ENCODE measurements at regions of chr7 and their contacts with region 1.

Region 1: DNA sequence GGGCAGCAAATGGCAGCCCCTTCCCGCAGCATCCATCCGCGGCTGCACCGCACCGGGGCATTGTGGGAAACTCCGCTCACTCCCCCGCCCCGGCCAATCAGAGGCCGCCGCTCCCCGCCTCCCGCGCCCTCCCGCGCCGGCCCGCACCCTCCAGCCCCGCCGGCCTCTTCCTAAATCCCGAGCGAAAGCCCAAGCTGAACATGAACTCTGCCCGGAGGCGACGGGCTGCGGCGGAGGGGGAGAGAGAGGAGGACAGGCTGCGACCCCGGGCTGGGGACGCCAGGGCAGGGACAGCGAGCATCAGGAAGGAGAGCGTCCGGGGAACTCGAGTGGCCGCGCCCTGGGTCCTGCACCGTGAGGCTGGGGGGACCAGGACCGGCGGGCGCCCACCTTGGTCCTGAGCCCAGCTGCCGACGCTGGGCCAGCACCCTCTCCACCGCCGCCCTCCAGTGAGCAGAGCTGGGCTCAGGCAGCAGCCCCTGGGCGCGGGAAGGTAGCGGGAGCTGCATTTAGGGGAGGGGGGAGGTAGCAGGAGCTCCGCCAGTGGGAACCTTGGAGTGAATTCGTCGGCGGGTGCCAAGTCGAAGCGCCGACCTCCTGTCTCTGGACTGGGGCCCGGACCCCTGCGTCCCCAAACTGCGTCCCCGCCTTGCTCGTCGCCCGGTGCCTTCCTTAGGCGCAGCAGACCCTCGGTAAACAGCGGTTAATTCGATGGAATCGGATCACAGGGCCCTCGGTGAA is at the start of gene DGKI:
- DNase-seq: no peak
- H3K4me3 ChIP-seq: peak within 1 kb of the TSS in 2 of 4 donors; percentile 12 to 34
- H3K27ac ChIP-seq: no peak within 1 kb of the TSS
- H3K4me1 ChIP-seq: peaks cover 0 to 13% (median 10%) of the 10 kb centered on the region in 4 donors
- H3K27me3 ChIP-seq: peaks cover 62% of the 10 kb centered on the region
- CTCF ChIP-seq: no peak
- EP300 ChIP-seq: no peak
- POLR2A ChIP-seq: no peak
- total RNA-seq, gene DGKI: 0.64 to 1.2 (median 1.00) TPM in 3 of 4 donors, not detected in the other

Region 2: GRCh38 chr7:137731436-137731835 is 115.6 kb before region 1 on chr7:
- in situ Hi-C with region 1: loop called in 1 of 4 experiments (anchors 25 kb)
- intact Hi-C with region 1: no loop called
- DNase-seq: no peak
- H3K4me3 ChIP-seq: no peak overlapping the region
- H3K27ac ChIP-seq: no peak overlapping the region
- H3K4me1 ChIP-seq: no peaks in the 10 kb centered on the region
- H3K27me3 ChIP-seq: peaks cover 8% of the 10 kb centered on the region
- CTCF ChIP-seq: no peak
- EP300 ChIP-seq: no peak
- POLR2A ChIP-seq: no peak

Region 3: DNA sequence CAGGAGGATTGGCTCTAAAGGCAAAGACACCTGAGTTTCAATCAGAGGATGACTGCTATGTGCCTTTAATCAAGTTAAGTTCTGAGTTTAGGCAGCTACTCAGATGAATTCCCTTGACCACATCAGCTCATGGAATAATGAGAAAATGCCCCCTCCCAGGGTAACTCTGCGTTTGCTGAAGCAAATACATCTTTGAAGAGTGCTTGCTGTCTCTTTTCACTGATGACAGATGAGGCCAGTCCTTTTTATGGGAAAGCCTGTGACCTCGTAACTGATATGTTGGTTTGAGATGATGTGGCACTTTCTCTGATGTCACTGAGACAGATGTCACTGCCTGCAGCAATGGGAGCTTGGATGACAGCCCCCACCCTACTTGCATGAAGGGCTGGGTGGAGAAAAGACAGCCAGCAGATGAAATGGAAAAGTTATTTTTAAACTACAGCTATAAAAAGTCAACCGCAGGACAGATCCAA is 43.5 kb after region 1 on chr7:
- in situ Hi-C with region 1: no loop called
- intact Hi-C with region 1: no loop called
- DNase-seq: no peak
- H3K4me3 ChIP-seq: no peak overlapping the region
- H3K27ac ChIP-seq: no peak overlapping the region
- H3K4me1 ChIP-seq: peaks cover 0 to 14% (median 12%) of the 10 kb centered on the region in 4 donors
- H3K27me3 ChIP-seq: no peaks in the 10 kb centered on the region
- CTCF ChIP-seq: no peak
- EP300 ChIP-seq: no peak
- POLR2A ChIP-seq: no peak

Measured in transverse colon (tissue), 4 donors.